A673 (cell line): ENCODE measurements at regions of chr6 and their contacts with region 1.

Region 1: GRCh38 chr6:143912671-143913070 is 48.4 kb downstream of the ZC2HC1B start:
- DNase-seq: no peak
- H3K4me3 ChIP-seq: no peak overlapping the region
- H3K27ac ChIP-seq: no peak overlapping the region
- H3K4me1 ChIP-seq: no peaks in the 10 kb centered on the region
- H3K27me3 ChIP-seq: no peaks in the 10 kb centered on the region
- CTCF ChIP-seq: no peak

Region 2: DNA sequence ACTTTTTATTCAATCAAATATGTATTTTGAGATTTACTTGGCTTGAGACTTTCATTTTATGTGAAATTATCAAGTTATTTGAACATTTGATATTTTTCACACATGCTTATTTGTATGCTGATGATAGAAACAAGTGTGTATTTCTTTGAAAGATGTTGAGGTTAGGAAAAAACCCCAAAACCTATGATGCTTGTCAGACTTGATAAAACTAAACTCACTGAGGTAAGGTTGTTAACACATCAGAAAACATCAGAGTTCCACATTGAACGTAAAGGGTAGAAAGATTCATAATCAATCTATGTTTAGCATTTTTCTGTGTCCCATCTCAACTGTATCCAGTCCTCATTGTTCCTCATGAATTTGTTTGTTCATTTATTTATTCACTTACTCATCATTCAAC is 170.5 kb after region 1 on chr6:
- CTCF ChIA-PET with region 1: no interaction called
- POLR2A ChIA-PET with region 1: interaction called, 19 read pairs
- intact Hi-C with region 1: no loop called
- DNase-seq: no peak
- H3K4me3 ChIP-seq: no peak overlapping the region
- H3K27ac ChIP-seq: no peak overlapping the region
- H3K4me1 ChIP-seq: no peaks in the 10 kb centered on the region
- H3K27me3 ChIP-seq: no peaks in the 10 kb centered on the region
- CTCF ChIP-seq: no peak